CD8-positive, alpha-beta T cell (primary cell): ENCODE measurements at regions of chr4 and their contacts with region 1.

Region 1: DNA sequence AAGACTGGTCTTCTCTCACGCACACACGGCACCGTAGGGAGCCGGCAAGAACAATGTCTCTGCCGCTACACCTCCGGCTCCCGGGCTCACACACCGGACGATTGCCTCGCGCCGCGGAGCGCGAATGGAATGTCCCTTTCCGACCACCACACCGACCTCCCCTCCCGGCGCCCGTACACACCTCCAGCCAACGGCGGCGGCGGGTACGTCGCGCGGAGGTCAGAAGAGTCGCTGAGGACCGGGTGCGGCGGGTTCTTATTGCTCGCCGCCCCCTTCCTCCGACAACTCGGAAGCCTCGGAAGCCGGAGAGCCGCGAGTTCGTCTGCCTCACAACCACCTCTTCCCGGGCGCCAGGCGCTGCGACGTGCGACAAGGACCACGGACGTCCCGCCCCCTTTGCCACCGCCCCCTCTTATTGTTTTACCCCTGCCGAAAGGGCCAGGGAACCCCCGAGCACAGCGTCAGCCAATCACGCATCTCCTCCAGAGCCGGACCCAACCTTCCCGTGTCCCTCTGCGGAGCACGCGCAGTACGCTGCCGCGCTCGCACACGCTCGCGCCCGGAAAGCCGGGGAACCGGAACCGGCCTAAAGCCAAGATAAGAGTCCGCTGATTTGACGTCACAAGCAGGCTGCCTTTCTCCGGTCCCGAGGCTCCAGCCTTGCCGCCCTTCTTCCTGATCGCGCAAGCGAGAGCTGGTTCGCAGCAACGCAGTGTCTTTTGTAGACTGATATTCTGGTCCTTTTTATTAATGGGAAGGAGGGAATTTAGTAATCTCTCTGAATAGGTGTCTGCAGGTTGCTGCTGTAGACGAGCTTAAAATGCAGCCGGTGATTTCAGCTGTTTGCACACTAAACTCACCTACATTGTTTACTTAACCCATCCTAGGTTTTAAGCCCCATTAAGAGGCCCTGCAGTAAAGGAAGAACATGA is at the start of gene G3BP2:
- DNase-seq: peak; percentile 96 to 100 (median 97)
- ATAC-seq: peak; percentile 92
- H3K4me3 ChIP-seq: peak within 1 kb of the TSS; percentile 96 to 100
- H3K4me3 Mint-ChIP-seq: peak within 1 kb of the TSS; percentile 99
- H3K27ac ChIP-seq: peak within 1 kb of the TSS; percentile 94 to 99
- H3K27ac Mint-ChIP-seq: peak within 1 kb of the TSS; percentile 98
- H3K4me1 ChIP-seq: peaks cover 45% of the 10 kb centered on the region
- H3K4me1 Mint-ChIP-seq: peaks cover 42% of the 10 kb centered on the region
- H3K27me3 ChIP-seq: no peaks in the 10 kb centered on the region
- H3K27me3 Mint-ChIP-seq: no peaks in the 10 kb centered on the region
- CTCF ChIP-seq: no peak
- total RNA-seq, gene G3BP2: 410 TPM

Region 2: GRCh38 chr4:75630174-75630936 is 42.9 kb before region 1 on chr4 and contains the start of gene CDKL2:
- CTCF ChIA-PET with region 1: interaction called, 4 read pairs
- POLR2A ChIA-PET with region 1: interaction called, 10 read pairs
- intact Hi-C with region 1: loop called in 1 of 2 experiments (anchors 1 kb)
- DNase-seq: peak; percentile 85 to 96 (median 95)
- ATAC-seq: peak; percentile 99
- H3K4me3 ChIP-seq: peak within 1 kb of the TSS; percentile 74 to 82
- H3K4me3 Mint-ChIP-seq: peak within 1 kb of the TSS; percentile 91
- H3K27ac ChIP-seq: peak within 1 kb of the TSS; percentile 51 to 56
- H3K27ac Mint-ChIP-seq: peak within 1 kb of the TSS; percentile 84
- H3K4me1 ChIP-seq: peaks cover 6% of the 10 kb centered on the region
- H3K4me1 Mint-ChIP-seq: peaks cover 15% of the 10 kb centered on the region
- H3K27me3 ChIP-seq: no peaks in the 10 kb centered on the region
- H3K27me3 Mint-ChIP-seq: no peaks in the 10 kb centered on the region
- CTCF ChIP-seq: no peak
- total RNA-seq, gene CDKL2: 0.89 to 1.4 TPM

Region 3: GRCh38 chr4:75686346-75686745 is 13.1 kb after region 1 on chr4:
- CTCF ChIA-PET with region 1: interaction called, 3 read pairs
- POLR2A ChIA-PET with region 1: interaction called, 17 read pairs
- intact Hi-C with region 1: loop called (anchors 1 kb)
- DNase-seq: peak in 8 of 9 experiments; percentile 9 to 78 (median 53)
- ATAC-seq: peak; percentile 81
- H3K4me3 ChIP-seq: no peak overlapping the region
- H3K4me3 Mint-ChIP-seq: peak overlapping the region; percentile 17
- H3K27ac ChIP-seq: peak overlapping the region in 1 of 2 experiments; percentile 57
- H3K27ac Mint-ChIP-seq: peak overlapping the region; percentile 71
- H3K4me1 ChIP-seq: peaks cover 38% of the 10 kb centered on the region
- H3K4me1 Mint-ChIP-seq: peaks cover 45% of the 10 kb centered on the region
- H3K27me3 ChIP-seq: no peaks in the 10 kb centered on the region
- H3K27me3 Mint-ChIP-seq: no peaks in the 10 kb centered on the region
- CTCF ChIP-seq: no peak

Region 4: DNA sequence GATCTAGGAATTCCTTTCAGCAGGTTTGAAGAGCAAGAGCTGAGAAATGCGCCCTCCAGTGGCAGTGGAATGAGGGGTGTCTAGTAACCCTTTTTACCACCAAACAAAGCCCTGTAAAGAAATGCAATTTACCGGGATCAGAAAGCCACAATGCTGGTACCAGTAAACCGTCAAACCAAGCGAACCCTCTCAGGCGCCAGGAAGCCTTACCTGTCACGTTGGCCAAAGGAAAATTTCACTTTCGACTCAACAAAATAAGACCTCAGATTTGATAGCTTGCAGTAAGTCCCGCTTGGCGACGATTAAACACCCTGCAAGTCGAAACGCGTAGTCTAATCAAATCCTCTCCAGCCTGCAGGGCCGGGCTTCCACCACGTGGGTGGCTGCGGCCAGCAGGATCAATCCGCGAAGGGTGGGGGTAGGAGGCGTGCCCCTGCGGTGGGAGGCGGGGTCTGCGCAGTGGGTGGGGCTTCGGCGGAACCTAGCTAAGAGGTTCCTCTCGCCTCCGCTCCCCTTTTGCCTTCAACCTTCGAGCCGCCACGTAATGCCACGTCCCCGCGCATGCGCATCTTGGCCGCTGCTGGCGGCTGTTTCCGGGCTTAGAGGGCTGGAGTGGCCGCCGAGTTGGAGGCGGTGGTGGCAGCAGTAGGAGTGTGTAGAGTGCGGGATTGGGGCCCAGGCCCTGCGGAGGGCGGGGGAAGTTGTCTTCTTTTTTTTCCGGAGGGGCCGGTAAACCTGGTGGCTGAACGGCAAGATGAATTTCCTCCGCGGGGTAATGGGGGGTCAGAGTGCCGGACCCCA is 51.0 kb after region 1 on chr4 and contains the start of gene USO1:
- CTCF ChIA-PET with region 1: interaction called, 26 read pairs
- POLR2A ChIA-PET with region 1: interaction called, 95 read pairs
- intact Hi-C with region 1: loop called (anchors 1 kb)
- DNase-seq: peak; percentile 98 to 100 (median 99)
- ATAC-seq: peak; percentile 92
- H3K4me3 ChIP-seq: peak within 1 kb of the TSS; percentile 58 to 99
- H3K4me3 Mint-ChIP-seq: peak within 1 kb of the TSS; percentile 99
- H3K27ac ChIP-seq: peak within 1 kb of the TSS; percentile 70 to 93
- H3K27ac Mint-ChIP-seq: peak within 1 kb of the TSS; percentile 99
- H3K4me1 ChIP-seq: peaks cover 32% of the 10 kb centered on the region
- H3K4me1 Mint-ChIP-seq: peaks cover 54% of the 10 kb centered on the region
- H3K27me3 ChIP-seq: no peaks in the 10 kb centered on the region
- H3K27me3 Mint-ChIP-seq: no peaks in the 10 kb centered on the region
- CTCF ChIP-seq: peak; percentile 79
- total RNA-seq, gene USO1: 9.8 to 10.2 TPM

Region 5: GRCh38 chr4:75844151-75844662 is 170.9 kb after region 1 on chr4:
- CTCF ChIA-PET with region 1: no interaction called
- POLR2A ChIA-PET with region 1: no interaction called
- intact Hi-C with region 1: no loop called
- DNase-seq: no peak
- ATAC-seq: no peak
- H3K4me3 ChIP-seq: no peak overlapping the region
- H3K4me3 Mint-ChIP-seq: no peak overlapping the region
- H3K27ac ChIP-seq: no peak overlapping the region
- H3K27ac Mint-ChIP-seq: no peak overlapping the region
- H3K4me1 ChIP-seq: no peaks in the 10 kb centered on the region
- H3K4me1 Mint-ChIP-seq: no peaks in the 10 kb centered on the region
- H3K27me3 ChIP-seq: no peaks in the 10 kb centered on the region
- H3K27me3 Mint-ChIP-seq: no peaks in the 10 kb centered on the region
- CTCF ChIP-seq: no peak

Region 6: DNA sequence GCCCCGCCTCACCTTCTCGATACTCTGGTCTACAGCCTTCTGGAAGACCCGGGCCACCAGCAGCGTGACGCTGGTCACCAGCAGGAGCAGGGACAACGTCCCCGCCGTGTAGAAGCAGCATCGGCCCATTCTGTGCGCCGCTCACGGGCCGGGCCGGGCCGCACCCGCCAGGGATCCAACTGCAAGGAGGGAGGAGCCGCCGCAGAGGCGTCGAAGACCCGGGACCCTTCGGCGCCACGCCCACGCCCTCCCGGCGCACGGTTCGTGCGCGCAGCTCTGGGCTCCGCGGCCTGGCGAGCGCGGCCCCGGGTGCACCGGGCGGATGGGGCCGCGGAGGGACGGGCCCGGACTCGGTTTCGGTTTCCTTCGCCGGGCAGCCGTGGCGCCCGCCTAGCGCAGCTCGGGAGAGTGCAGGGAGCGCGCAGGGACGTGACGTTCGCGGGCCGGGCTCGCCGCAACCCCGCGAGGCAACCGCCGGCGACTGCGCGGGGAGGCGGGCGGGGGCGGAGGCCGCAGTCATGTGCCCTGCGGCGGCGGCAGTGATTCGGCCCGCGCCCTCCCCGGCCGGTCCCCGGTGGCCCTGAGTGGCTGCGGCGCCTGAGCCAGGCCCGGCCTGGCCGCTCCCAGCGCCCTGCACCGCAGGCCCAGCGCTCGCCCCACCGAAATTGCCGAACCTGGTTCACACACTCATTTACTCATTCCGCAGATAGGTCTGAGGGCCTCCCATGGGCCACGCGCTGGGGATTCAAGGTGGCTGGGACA is 540.3 kb after region 1 on chr4 and contains the start of gene SCARB2:
- CTCF ChIA-PET with region 1: no interaction called
- POLR2A ChIA-PET with region 1: no interaction called
- intact Hi-C with region 1: loop called in 1 of 2 experiments (anchors 5 kb)
- DNase-seq: peak; percentile 44 to 91 (median 73)
- ATAC-seq: peak; percentile 64
- H3K4me3 ChIP-seq: peak within 1 kb of the TSS; percentile 71 to 75
- H3K4me3 Mint-ChIP-seq: peak within 1 kb of the TSS; percentile 89
- H3K27ac ChIP-seq: peak within 1 kb of the TSS; percentile 85
- H3K27ac Mint-ChIP-seq: peak within 1 kb of the TSS; percentile 95
- H3K4me1 ChIP-seq: peaks cover 29% of the 10 kb centered on the region
- H3K4me1 Mint-ChIP-seq: peaks cover 59% of the 10 kb centered on the region
- H3K27me3 ChIP-seq: no peaks in the 10 kb centered on the region
- H3K27me3 Mint-ChIP-seq: no peaks in the 10 kb centered on the region
- CTCF ChIP-seq: no peak
- total RNA-seq, gene SCARB2: 33.3 to 34.4 TPM